Esophagus muscularis mucosa (tissue), 4 donors: ENCODE measurements at regions of chr7 and their contacts with region 1.

Region 1: DNA sequence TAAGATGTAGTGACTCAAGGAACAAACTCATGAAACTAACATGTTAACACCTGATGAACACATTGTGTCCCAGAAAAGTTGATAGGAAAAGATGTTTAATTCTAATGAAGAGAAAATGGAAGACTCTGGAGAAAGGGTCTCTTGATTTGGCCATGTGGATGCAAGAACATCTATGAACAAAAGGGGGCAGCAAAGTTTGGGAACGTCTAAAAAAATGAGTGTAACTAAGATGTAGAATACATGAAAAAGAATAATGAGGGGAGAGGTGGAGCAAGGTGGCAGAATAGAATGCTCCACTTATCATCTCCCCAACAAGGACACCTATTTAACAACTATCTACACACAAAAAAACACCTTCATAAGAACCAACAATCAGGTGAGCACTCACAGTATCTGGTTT is 805.1 kb downstream of the TNS3 start:
- DNase-seq: no peak
- H3K4me3 ChIP-seq: no peak overlapping the region
- H3K27ac ChIP-seq: no peak overlapping the region
- H3K4me1 ChIP-seq: peaks cover 30 to 44% (median 39%) of the 10 kb centered on the region in 4 donors
- H3K27me3 ChIP-seq: no peaks in the 10 kb centered on the region
- CTCF ChIP-seq: peak in 2 of 3 experiments; percentile 17 to 32
- EP300 ChIP-seq: no peak
- POLR2A ChIP-seq: no peak

Region 2: GRCh38 chr7:46839651-46840050 is 62.9 kb after region 1 on chr7:
- intact Hi-C with region 1: loop called (anchors 10 kb)
- DNase-seq: no peak
- H3K4me3 ChIP-seq: no peak overlapping the region
- H3K27ac ChIP-seq: no peak overlapping the region
- H3K4me1 ChIP-seq: no peaks in the 10 kb centered on the region
- H3K27me3 ChIP-seq: no peaks in the 10 kb centered on the region
- CTCF ChIP-seq: no peak
- EP300 ChIP-seq: no peak
- POLR2A ChIP-seq: no peak